Activated CD4-positive, alpha-beta T cell treated with anti-CD3 and anti-CD28 coated beads, Interleukin-2, amount 10 ng/mL, durations not matched to agents 24 days and 14 days (primary cell): ENCODE measurements at regions of chr19 and their contacts with region 1.

Region 1: DNA sequence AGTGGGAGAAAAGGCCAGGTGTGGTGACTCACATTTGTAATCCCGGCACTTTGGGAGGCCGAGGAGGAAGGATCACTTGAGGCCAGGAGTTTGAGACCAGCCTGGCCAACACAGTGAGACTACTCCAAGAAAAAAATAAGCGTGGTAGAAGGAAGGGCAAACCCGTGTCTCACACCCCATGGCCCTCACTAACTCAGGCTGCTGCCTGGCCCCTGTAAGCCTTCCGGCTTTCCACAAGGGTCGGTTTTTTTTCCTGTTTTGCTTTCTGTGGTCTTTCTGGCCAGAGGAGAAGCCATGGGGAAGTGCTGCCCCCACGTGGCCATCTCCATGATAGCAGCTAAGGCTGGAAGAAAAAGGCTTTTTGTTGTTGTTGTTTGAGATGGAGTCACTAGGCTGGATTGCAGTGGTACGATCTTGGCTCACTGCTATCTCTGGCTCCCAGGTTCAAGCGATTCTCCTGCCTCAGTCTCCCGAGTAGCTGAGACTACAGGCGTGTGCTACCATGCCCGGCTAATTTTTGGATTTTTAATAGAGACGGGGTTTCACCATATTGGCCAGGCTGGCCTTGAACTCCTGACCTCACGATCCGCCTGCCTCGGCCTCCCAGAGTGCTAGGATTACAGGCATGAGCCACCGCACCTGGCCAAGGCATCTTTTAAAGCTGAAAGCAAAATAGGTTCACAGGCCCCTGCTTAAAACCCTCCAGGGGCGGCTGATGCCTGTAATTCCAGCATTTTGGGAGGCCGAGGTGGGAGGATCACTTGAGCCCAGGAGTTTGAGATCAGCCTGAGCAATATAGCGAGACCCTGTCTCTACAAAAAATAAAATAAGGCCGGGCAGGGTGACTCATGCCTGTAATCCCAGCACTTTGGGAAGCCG is 7.5 kb upstream of the ARHGEF18 start:
- DNase-seq: peak; percentile 95
- H3K4me3 Mint-ChIP-seq: no peak overlapping the region
- H3K27ac Mint-ChIP-seq: no peak overlapping the region
- H3K4me1 Mint-ChIP-seq: peaks cover 47% of the 10 kb centered on the region
- H3K27me3 Mint-ChIP-seq: peaks cover 9% of the 10 kb centered on the region

Region 2: DNA sequence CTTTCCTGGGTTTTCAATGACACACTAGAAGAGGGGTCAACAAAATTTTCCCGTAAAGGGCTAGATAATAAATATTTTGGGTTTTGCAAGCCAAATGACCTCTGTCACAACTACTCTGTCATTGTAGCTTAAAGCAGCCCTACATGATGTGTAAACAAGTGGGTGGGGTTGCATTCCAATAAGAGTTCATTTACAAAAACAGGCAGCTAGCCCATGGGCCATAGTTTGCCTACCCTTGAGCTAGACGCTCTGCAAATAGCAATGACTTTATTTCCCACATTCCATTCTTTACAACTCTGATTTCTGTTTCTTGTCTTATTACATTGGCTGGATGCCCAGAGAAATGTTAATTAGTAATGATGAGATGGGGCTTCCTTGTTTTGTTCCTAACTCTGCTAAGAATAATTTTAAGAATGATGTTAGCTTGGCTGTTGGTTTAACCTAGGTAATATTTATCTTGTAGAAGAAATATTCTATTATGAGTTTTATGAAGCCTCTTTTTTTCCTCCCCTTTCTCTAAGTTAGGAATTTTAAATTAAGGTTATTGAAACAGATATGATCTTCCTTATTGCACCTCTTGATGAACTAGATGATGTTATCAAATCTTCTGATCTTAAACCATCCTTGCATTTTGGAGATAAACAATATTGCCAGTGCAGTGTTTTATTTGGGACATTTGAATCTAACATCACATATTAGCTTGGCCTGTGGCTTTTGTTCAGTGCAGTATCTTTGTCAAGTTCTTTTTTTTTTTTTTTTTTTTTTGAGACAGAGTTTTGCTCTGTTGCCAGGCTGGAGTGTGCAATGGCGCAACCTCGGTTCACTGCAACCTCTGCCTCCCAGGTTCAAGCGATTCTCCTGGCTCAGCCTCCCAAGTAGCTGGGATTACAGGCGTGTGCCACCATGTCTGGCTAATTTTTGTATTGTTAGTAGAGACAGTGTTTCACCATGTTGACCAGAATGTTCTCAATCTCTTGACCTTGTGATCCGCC is 195.4 kb before region 1 on chr19:
- intact Hi-C with region 1: loop called (anchors 1 kb)
- DNase-seq: no peak
- H3K4me3 Mint-ChIP-seq: no peak overlapping the region
- H3K27ac Mint-ChIP-seq: no peak overlapping the region
- H3K4me1 Mint-ChIP-seq: no peaks in the 10 kb centered on the region
- H3K27me3 Mint-ChIP-seq: no peaks in the 10 kb centered on the region